HepG2 (cell line): ENCODE measurements at regions of chr11 and their contacts with region 1.

Region 1: DNA sequence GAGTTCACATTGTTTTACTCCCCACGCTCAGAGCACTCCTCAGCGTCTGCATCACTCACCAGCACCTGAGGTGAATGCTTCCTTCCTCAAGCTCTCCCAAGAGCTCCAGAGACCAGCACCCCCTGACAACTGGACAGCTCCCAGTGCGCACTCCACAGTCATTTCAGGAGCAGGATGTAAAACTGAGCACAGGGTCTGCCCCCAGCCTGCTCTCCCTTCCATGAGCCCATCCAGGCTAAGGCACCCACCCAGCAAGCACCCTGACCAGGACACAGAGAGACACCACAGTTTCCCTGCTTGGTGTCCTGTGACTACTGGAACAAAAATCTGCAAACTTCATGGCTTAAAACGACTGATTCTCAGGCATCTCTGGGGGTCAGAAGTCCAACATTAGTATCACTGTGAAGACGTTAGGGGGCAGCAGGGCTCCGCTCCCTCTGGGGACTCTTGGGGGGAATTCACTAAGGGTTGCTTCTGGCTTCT is 3.3 kb downstream of the SCGB1D2 start:
- DNase-seq: peak; percentile 50
- ATAC-seq: peak; percentile 91
- H3K4me3 ChIP-seq: no peak overlapping the region
- H3K27ac ChIP-seq: no peak overlapping the region
- H3K4me1 ChIP-seq: peaks cover 14% of the 10 kb centered on the region; the same call in 1 of the 2 replicates
- H3K27me3 ChIP-seq: peaks cover 0 to 6% of the 10 kb centered on the region in 2 experiments; a peak in 1 of 5 replicates
- CTCF ChIP-seq: peak; percentile 86
- EP300 ChIP-seq: no peak
- POLR2A ChIP-seq: no peak
- RAD21 ChIP-seq: peak; percentile 81

Region 2: DNA sequence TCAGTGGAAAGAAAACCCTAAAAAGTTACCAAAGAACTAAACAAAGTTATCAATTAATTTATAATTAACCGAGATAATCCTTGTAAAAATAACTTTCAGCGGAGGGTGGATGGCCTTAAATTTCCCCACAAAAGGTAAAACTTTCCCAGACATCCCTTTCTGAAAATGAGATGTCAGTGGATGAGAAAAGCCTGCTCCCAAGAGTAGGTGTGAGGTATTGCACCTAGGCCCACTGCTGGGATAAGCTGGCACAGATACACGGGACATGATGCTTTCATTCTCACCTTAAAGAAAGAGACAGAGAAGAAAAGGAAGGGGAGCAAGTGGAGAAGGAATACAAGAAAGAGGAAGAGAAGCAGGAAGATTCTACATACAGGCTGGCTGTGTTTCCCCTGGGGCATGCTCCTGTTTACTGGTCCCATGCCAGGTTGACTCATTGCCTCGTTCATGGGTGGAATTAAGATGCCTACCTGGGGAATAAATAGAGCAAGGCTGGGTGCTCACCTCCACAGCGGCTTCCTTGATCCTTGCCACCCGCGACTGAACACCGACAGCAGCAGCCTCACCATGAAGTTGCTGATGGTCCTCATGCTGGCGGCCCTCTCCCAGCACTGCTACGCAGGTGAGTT is 24.5 kb after region 1 on chr11 and contains the start of gene SCGB2A2:
- CTCF ChIA-PET with region 1: interaction called, 9 read pairs
- POLR2A ChIA-PET with region 1: no interaction called
- in situ Hi-C with region 1: no loop called
- intact Hi-C with region 1: loop called (anchors 1 kb)
- DNase-seq: no peak
- ATAC-seq: peak; percentile 79
- H3K4me3 ChIP-seq: no peak within 1 kb of the TSS
- H3K27ac ChIP-seq: no peak within 1 kb of the TSS
- H3K4me1 ChIP-seq: peaks cover 41% of the 10 kb centered on the region
- H3K27me3 ChIP-seq: peaks cover 2 to 8% of the 10 kb centered on the region in 2 experiments; a peak in 2 of 5 replicates
- CTCF ChIP-seq: peak; percentile 58
- EP300 ChIP-seq: no peak
- POLR2A ChIP-seq: no peak
- RAD21 ChIP-seq: peak; percentile 69
- total RNA-seq, gene SCGB2A2: not detected in 2 replicates

Region 3: GRCh38 chr11:62309991-62310390 is 64.7 kb after region 1 on chr11:
- CTCF ChIA-PET with region 1: interaction called, 24 read pairs
- POLR2A ChIA-PET with region 1: no interaction called
- in situ Hi-C with region 1: loop called (anchors 5 kb)
- intact Hi-C with region 1: loop called (anchors 1 kb)
- DNase-seq: no peak
- ATAC-seq: no peak
- H3K4me3 ChIP-seq: no peak overlapping the region
- H3K27ac ChIP-seq: no peak overlapping the region
- H3K4me1 ChIP-seq: no peaks in the 10 kb centered on the region
- H3K27me3 ChIP-seq: peaks cover 2 to 13% of the 10 kb centered on the region in 2 experiments; a peak in 3 of 5 replicates
- CTCF ChIP-seq: no peak
- EP300 ChIP-seq: no peak
- POLR2A ChIP-seq: no peak
- RAD21 ChIP-seq: no peak

Region 4: GRCh38 chr11:62315431-62315830 is 70.1 kb after region 1 on chr11:
- CTCF ChIA-PET with region 1: interaction called, 24 read pairs
- POLR2A ChIA-PET with region 1: no interaction called
- in situ Hi-C with region 1: loop called (anchors 5 kb)
- intact Hi-C with region 1: loop called (anchors 1 kb)
- DNase-seq: no peak
- ATAC-seq: no peak
- H3K4me3 ChIP-seq: no peak overlapping the region
- H3K27ac ChIP-seq: no peak overlapping the region
- H3K4me1 ChIP-seq: no peaks in the 10 kb centered on the region
- H3K27me3 ChIP-seq: peaks cover 2 to 26% of the 10 kb centered on the region in 2 experiments; a peak in 4 of 5 replicates
- CTCF ChIP-seq: no peak
- EP300 ChIP-seq: no peak
- POLR2A ChIP-seq: no peak
- RAD21 ChIP-seq: no peak